IMR-90 (cell line): ENCODE measurements at regions of chr12 and their contacts with region 1.

Region 1: GRCh38 chr12:74801625-74802024 is 264.0 kb downstream of the ATXN7L3B start:
- DNase-seq: no peak
- ATAC-seq: no peak
- H3K4me3 ChIP-seq: no peak overlapping the region
- H3K27ac ChIP-seq: no peak overlapping the region
- H3K4me1 ChIP-seq: no peaks in the 10 kb centered on the region
- H3K27me3 ChIP-seq: no peaks in the 10 kb centered on the region
- CTCF ChIP-seq: no peak
- POLR2A ChIP-seq: no peak
- RAD21 ChIP-seq: no peak

Region 2: GRCh38 chr12:74759746-74760145 is 41.9 kb before region 1 on chr12:
- CTCF ChIA-PET with region 1: no interaction called
- POLR2A ChIA-PET with region 1: no interaction called
- dilution Hi-C with region 1: no loop called
- in situ Hi-C with region 1: no loop called
- intact Hi-C with region 1: no loop called
- DNase-seq: no peak
- ATAC-seq: no peak
- H3K4me3 ChIP-seq: no peak overlapping the region
- H3K27ac ChIP-seq: no peak overlapping the region
- H3K4me1 ChIP-seq: no peaks in the 10 kb centered on the region
- H3K27me3 ChIP-seq: no peaks in the 10 kb centered on the region
- CTCF ChIP-seq: no peak
- POLR2A ChIP-seq: no peak
- RAD21 ChIP-seq: no peak

Region 3: GRCh38 chr12:75058228-75058627 is 256.6 kb after region 1 on chr12:
- CTCF ChIA-PET with region 1: no interaction called
- POLR2A ChIA-PET with region 1: no interaction called
- dilution Hi-C with region 1: no loop called
- in situ Hi-C with region 1: no loop called
- intact Hi-C with region 1: loop called (anchors 10 kb)
- DNase-seq: peak; percentile 2
- ATAC-seq: no peak
- H3K4me3 ChIP-seq: no peak overlapping the region
- H3K27ac ChIP-seq: no peak overlapping the region
- H3K4me1 ChIP-seq: no peaks in the 10 kb centered on the region
- H3K27me3 ChIP-seq: no peaks in the 10 kb centered on the region
- CTCF ChIP-seq: peak; percentile 22; the same call in 1 of the 2 replicates
- POLR2A ChIP-seq: no peak
- RAD21 ChIP-seq: peak; percentile 21; the same call in 1 of the 2 replicates

Region 4: DNA sequence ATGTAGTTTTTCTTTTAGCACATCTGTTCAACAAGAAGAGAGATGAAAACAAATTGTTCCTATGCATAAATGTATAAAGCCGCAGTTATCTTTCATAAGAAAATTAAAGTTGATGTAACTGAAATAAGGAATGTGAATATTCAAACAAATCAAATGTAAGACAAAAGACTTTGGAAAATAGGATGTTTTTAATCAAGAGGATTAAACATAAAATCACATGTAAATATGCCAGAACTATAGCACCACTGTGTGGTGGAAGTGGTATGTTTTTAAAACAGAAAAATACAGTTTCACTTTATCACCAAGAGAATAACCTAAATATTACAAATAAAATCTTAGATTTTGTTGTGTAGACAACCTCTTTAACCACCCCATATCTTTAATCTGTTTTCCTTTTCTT is 488.1 kb after region 1 on chr12:
- CTCF ChIA-PET with region 1: no interaction called
- POLR2A ChIA-PET with region 1: no interaction called
- dilution Hi-C with region 1: no loop called
- in situ Hi-C with region 1: no loop called
- intact Hi-C with region 1: loop called (anchors 2 kb)
- DNase-seq: peak; percentile 31
- ATAC-seq: 0 out of 2 replicates have a peak, but pooled peaks have one; percentile 51
- H3K4me3 ChIP-seq: no peak overlapping the region
- H3K27ac ChIP-seq: no peak overlapping the region
- H3K4me1 ChIP-seq: no peaks in the 10 kb centered on the region
- H3K27me3 ChIP-seq: no peaks in the 10 kb centered on the region
- CTCF ChIP-seq: peak; percentile 54
- POLR2A ChIP-seq: no peak
- RAD21 ChIP-seq: peak; percentile 68